ENCODE measurements at regions of chr3 and their contacts with region 1.

Region 1: DNA sequence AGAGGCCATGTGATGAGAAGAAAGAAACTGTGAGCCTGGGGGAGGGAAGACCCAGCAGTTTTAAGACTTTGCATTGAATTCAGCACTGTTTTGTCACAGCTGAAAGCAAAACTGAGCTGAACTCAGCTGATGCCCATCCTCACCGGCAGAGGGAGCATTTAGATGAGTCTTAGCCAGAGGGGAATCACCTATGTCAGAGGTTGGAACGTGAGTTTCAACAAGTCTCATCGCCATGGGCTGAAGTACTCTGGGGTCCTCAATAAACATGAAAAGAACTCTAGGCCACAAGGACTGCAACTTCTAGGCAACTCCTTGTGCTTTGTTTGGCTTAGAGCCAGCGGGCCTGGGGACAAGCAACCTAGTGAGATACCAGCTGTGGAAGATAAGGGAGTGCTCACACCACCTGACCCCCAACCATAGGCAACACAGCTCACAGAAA is 324.5 kb downstream of the TBL1XR1 start:
- DNase-seq: peak; percentile 27
- ATAC-seq: peak; percentile 82
- H3K4me3 Mint-ChIP-seq: no peak overlapping the region
- H3K27ac Mint-ChIP-seq: no peak overlapping the region
- H3K4me1 Mint-ChIP-seq: peaks cover 2% of the 10 kb centered on the region
- H3K27me3 Mint-ChIP-seq: peaks cover 5% of the 10 kb centered on the region
- CTCF ChIP-seq: no peak

Region 2: DNA sequence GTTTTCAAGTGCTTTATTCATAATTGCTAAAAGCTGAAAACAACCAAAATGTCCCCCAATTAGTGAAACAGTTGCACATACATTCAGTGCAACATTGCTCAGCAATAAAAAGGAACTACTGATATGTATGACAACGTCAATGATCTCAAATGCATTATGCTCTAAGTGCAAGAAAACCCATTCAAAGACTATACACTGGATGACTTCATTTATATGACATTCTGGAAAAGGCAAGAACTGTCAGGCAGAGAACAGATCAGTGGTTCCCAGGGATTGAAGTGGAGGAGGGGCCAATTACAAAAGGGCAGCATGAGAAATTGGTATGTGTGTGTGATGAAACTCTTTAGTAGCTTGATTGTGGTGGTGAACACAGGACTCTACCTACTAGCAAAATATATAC is 261.1 kb before region 1 on chr3:
- CTCF ChIA-PET with region 1: no interaction called
- POLR2A ChIA-PET with region 1: no interaction called
- intact Hi-C with region 1: no loop called
- DNase-seq: no peak
- ATAC-seq: no peak
- H3K4me3 Mint-ChIP-seq: no peak overlapping the region
- H3K27ac Mint-ChIP-seq: no peak overlapping the region
- H3K4me1 Mint-ChIP-seq: no peaks in the 10 kb centered on the region
- H3K27me3 Mint-ChIP-seq: no peaks in the 10 kb centered on the region
- CTCF ChIP-seq: no peak

Region 3: DNA sequence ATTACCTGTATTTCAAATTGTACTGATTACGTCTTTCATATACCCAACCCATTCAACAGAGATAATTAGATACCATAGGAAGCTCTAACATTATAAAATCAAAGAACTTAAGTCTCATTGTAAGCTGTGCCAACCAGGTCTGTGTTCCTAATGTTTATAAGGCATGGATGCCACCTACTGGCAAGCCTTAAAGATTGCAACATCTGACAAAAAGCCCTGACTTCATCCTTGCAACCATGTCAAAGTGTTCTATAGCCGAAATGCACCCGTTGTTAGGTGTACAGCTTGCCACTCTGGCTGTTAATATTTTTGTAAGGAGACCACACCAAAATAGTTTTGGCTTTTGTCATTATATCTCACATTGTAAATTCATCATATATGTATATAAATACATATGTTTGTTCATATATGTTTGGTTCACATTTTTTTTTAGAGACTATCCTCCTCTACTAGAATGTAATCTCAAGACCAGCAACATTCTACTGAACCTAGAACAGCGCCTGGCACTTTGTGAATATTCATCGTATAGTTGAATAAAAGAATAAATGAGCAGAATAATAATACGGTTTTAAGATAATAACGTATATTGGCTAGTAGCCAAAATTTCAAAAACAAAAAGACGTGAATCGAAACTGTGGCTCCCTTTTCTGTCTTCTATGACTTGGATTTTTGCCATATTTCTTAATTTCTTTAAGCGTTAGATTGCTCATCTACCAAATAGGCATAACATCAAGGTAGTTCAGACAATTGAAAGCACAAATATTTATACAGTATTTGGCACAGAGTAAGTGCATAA is 66.4 kb after region 1 on chr3:
- CTCF ChIA-PET with region 1: interaction called, 37 read pairs
- POLR2A ChIA-PET with region 1: no interaction called
- intact Hi-C with region 1: loop called (anchors 1 kb)
- DNase-seq: no peak
- ATAC-seq: peak; percentile 61
- H3K4me3 Mint-ChIP-seq: no peak overlapping the region
- H3K27ac Mint-ChIP-seq: no peak overlapping the region
- H3K4me1 Mint-ChIP-seq: no peaks in the 10 kb centered on the region
- H3K27me3 Mint-ChIP-seq: no peaks in the 10 kb centered on the region
- CTCF ChIP-seq: peak; percentile 29

Region 4: GRCh38 chr3:177378168-177378567 is 505.4 kb after region 1 on chr3:
- CTCF ChIA-PET with region 1: no interaction called
- POLR2A ChIA-PET with region 1: no interaction called
- intact Hi-C with region 1: loop called (anchors 5 kb)
- DNase-seq: no peak
- ATAC-seq: peak; percentile 63
- H3K4me3 Mint-ChIP-seq: peak overlapping the region; percentile 46
- H3K27ac Mint-ChIP-seq: peak overlapping the region; percentile 69
- H3K4me1 Mint-ChIP-seq: peaks cover 55% of the 10 kb centered on the region
- H3K27me3 Mint-ChIP-seq: no peaks in the 10 kb centered on the region
- CTCF ChIP-seq: no peak

Region 5: GRCh38 chr3:178159691-178160220 is 1287.0 kb after region 1 on chr3:
- CTCF ChIA-PET with region 1: no interaction called
- POLR2A ChIA-PET with region 1: no interaction called
- intact Hi-C with region 1: loop called (anchors 5 kb)
- DNase-seq: no peak
- ATAC-seq: no peak
- H3K4me3 Mint-ChIP-seq: no peak overlapping the region
- H3K27ac Mint-ChIP-seq: no peak overlapping the region
- H3K4me1 Mint-ChIP-seq: no peaks in the 10 kb centered on the region
- H3K27me3 Mint-ChIP-seq: peaks cover 10% of the 10 kb centered on the region
- CTCF ChIP-seq: no peak

Region 6: GRCh38 chr3:178325330-178325729 is 1452.5 kb after region 1 on chr3:
- CTCF ChIA-PET with region 1: no interaction called
- POLR2A ChIA-PET with region 1: no interaction called
- intact Hi-C with region 1: loop called (anchors 1 kb)
- DNase-seq: no peak
- ATAC-seq: no peak
- H3K4me3 Mint-ChIP-seq: no peak overlapping the region
- H3K27ac Mint-ChIP-seq: no peak overlapping the region
- H3K4me1 Mint-ChIP-seq: no peaks in the 10 kb centered on the region
- H3K27me3 Mint-ChIP-seq: no peaks in the 10 kb centered on the region
- CTCF ChIP-seq: no peak

Region 7: GRCh38 chr3:178385280-178385952 is 1512.6 kb after region 1 on chr3:
- CTCF ChIA-PET with region 1: interaction called, 45 read pairs
- POLR2A ChIA-PET with region 1: no interaction called
- intact Hi-C with region 1: loop called (anchors 1 kb)
- DNase-seq: no peak
- ATAC-seq: peak; percentile 28
- H3K4me3 Mint-ChIP-seq: no peak overlapping the region
- H3K27ac Mint-ChIP-seq: no peak overlapping the region
- H3K4me1 Mint-ChIP-seq: no peaks in the 10 kb centered on the region
- H3K27me3 Mint-ChIP-seq: no peaks in the 10 kb centered on the region
- CTCF ChIP-seq: peak; percentile 49

Measured in activated B cell treated with CpG ODN at 0.5 μM for 24 hours (primary cell).